Breast epithelium (tissue), 4 donors: ENCODE measurements at regions of chr14 and their contacts with region 1.

Region 1: GRCh38 chr14:56129933-56130332 is 11.7 kb downstream of the PELI2 start:
- DNase-seq: no peak
- H3K4me3 ChIP-seq: no peak overlapping the region
- H3K27ac ChIP-seq: no peak overlapping the region
- H3K4me1 ChIP-seq: no peaks in the 10 kb centered on the region
- H3K27me3 ChIP-seq: no peaks in the 10 kb centered on the region
- CTCF ChIP-seq: no peak
- POLR2A ChIP-seq: no peak

Region 2: DNA sequence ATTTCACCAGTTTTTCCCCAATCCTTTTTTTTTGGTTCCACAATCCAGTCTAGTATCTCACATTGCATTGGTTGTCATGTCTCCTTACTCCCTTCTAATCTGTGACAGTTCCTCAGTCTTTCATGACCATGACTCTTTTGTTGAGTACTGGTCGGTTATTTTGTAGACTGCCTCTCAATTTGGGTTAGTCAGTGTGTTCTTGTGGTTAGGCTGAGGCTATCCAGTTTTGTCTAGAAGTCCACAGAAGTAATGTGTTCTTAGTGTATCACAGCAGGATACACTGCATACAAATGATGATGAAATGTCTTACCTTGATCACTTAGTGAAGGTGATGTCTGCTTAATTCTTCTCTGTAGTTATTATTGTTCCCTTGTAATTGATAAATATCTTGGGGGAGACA is 13.1 kb after region 1 on chr14:
- intact Hi-C with region 1: loop called (anchors 1 kb)
- DNase-seq: no peak
- H3K4me3 ChIP-seq: no peak overlapping the region
- H3K27ac ChIP-seq: no peak overlapping the region
- H3K4me1 ChIP-seq: no peaks in the 10 kb centered on the region
- H3K27me3 ChIP-seq: no peaks in the 10 kb centered on the region
- CTCF ChIP-seq: no peak
- POLR2A ChIP-seq: no peak

Region 3: GRCh38 chr14:56153267-56153666 is 23.3 kb after region 1 on chr14:
- intact Hi-C with region 1: no loop called
- DNase-seq: no peak
- H3K4me3 ChIP-seq: no peak overlapping the region
- H3K27ac ChIP-seq: no peak overlapping the region
- H3K4me1 ChIP-seq: no peaks in the 10 kb centered on the region
- H3K27me3 ChIP-seq: no peaks in the 10 kb centered on the region
- CTCF ChIP-seq: no peak
- POLR2A ChIP-seq: no peak